Endothelial cell of umbilical vein (primary cell): ENCODE measurements at regions of chr2 and their contacts with region 1.

Region 1: GRCh38 chr2:192162392-192163042 is 32.2 kb downstream of the TMEFF2 start:
- DNase-seq: peak; percentile 87
- H3K4me3 ChIP-seq: no peak overlapping the region
- H3K27ac ChIP-seq: peak overlapping the region; percentile 16
- H3K4me1 ChIP-seq: peaks cover 12% of the 10 kb centered on the region
- H3K27me3 ChIP-seq: no peaks in the 10 kb centered on the region
- CTCF ChIP-seq: peak; percentile 68 to 73
- POLR2A ChIP-seq: no peak

Region 2: DNA sequence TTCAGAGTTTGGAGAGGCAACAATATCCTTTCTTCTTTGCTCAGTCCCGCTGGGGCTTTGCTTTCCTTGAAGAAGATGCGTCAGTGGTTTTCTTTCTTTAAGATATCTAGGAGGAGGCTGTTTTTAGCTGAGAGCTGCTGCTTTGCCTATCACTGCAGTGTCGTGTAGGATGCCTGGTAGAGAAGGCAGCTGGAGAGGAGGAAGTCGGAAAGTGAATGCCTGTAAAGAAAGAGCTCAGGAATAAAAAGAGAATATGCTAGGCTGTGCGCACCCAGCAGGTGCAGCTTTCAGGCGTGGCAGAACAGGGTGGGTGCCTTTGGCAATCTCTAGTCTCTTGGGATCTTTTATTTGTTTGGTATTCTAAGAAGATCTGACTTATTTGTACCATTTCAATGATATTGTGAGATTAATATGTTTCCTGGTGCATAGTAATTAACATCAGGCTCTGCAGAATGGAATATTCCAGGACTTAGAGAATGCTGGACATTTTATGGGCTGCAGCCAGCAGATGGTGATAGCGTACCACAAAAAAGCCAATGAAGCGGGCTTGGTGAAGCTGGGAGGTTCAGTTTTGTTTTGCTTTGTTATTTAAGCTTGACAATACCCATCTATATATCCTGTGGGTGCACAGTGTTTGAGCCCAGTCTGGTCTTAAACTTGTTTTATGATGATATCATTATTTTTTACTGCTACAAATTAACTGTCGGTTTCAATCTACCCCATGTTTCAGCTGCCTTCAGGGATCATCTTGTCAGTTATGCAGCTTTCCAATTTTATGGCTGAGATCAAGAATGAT is 350.5 kb before region 1 on chr2:
- CTCF ChIA-PET with region 1: interaction called, 532 read pairs
- POLR2A ChIA-PET with region 1: interaction called, 17 read pairs
- dilution Hi-C with region 1: no loop called
- intact Hi-C with region 1: loop called (anchors 1 kb)
- DNase-seq: peak; percentile 86
- H3K4me3 ChIP-seq: no peak overlapping the region
- H3K27ac ChIP-seq: no peak overlapping the region
- H3K4me1 ChIP-seq: peaks cover 2% of the 10 kb centered on the region
- H3K27me3 ChIP-seq: no peaks in the 10 kb centered on the region
- CTCF ChIP-seq: peak; percentile 67 to 68
- POLR2A ChIP-seq: no peak

Region 3: GRCh38 chr2:191857259-191857805 is 305.2 kb before region 1 on chr2:
- CTCF ChIA-PET with region 1: interaction called, 13 read pairs
- POLR2A ChIA-PET with region 1: interaction called, 4 read pairs
- dilution Hi-C with region 1: no loop called
- intact Hi-C with region 1: no loop called
- DNase-seq: peak; percentile 97
- H3K4me3 ChIP-seq: no peak overlapping the region
- H3K27ac ChIP-seq: peak overlapping the region; percentile 93
- H3K4me1 ChIP-seq: peaks cover 56% of the 10 kb centered on the region
- H3K27me3 ChIP-seq: no peaks in the 10 kb centered on the region
- CTCF ChIP-seq: no peak
- POLR2A ChIP-seq: peak; percentile 74

Region 4: DNA sequence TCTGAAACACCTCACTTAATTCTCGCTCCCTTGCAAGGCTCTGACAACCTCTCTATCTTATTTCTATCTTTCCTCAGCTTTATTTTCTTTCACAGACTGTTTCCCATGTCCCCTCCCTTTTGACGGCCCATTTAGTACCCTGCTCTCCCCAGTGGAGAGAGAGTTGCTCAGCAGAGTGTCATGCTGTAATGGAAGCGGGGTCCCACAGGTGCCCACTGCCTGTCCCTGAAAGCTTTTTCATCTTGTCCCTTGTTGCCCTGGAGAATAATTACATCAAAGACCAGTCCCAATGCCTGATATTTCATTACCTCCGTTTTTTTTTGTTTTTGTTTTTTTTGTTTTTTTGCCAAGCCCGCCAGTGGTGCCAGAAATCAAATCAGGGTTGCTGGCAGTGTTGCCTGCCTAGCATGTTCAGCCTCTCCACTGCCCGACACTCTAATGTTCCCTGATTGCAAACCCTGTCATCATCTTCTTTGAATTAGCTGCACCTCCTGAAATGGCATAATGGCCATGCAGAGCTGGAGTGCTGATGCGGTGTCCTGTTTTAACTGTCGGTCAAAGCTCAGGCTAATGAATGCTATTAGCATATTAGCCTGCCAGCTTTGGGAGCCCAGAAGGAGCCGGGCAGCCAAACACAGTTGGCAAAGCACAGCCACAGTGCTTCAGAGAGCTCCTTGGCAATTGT is 244.4 kb before region 1 on chr2:
- CTCF ChIA-PET with region 1: interaction called, 16 read pairs
- POLR2A ChIA-PET with region 1: interaction called, 3 read pairs
- dilution Hi-C with region 1: no loop called
- intact Hi-C with region 1: no loop called
- DNase-seq: peak; percentile 68
- H3K4me3 ChIP-seq: no peak overlapping the region
- H3K27ac ChIP-seq: peak overlapping the region; percentile 56
- H3K4me1 ChIP-seq: peaks cover 18% of the 10 kb centered on the region
- H3K27me3 ChIP-seq: no peaks in the 10 kb centered on the region
- CTCF ChIP-seq: no peak
- POLR2A ChIP-seq: no peak

Region 5: DNA sequence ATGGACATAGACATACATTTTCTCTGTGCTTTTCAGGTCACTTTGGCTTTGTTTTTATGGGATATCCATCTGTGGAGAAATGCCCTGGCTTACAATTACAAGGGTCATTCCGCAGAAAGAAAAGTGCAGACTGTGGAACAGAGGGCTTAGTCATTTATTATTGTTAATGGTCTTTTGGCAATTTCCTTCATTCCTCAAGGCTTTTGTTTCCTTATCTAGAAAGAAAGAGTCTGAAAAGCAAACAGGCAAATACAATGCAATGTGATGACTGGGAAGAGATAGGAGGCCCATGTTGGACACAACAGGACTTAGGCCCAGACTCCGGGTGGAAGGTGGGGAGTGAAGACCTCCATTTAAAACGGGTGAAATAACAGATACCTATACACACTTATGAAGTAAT is 186.1 kb before region 1 on chr2:
- CTCF ChIA-PET with region 1: interaction called, 7 read pairs
- POLR2A ChIA-PET with region 1: no interaction called
- dilution Hi-C with region 1: no loop called
- intact Hi-C with region 1: loop called (anchors 2 kb)
- DNase-seq: peak; percentile 99
- H3K4me3 ChIP-seq: no peak overlapping the region
- H3K27ac ChIP-seq: peak overlapping the region; percentile 86
- H3K4me1 ChIP-seq: peaks cover 44% of the 10 kb centered on the region
- H3K27me3 ChIP-seq: no peaks in the 10 kb centered on the region
- CTCF ChIP-seq: no peak
- POLR2A ChIP-seq: peak; percentile 64

Region 6: DNA sequence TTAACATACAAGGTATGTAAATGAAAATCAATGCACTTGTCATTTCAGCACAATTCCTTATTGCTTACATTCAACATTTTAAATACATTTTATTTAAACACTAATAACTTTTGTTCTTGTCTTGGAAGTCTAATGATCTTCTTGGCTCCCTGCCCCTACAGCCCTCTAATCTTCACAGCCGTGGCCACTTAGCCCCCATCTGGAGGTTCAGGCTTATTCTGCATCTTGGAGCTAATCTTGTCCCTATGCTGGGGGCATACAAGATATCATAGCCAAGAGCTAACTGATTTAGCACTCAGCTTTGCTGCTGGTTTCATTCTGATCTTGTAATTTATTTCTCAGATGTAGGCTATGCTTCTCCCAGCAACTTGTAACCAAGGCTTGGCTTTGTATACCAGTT is 108.6 kb before region 1 on chr2:
- CTCF ChIA-PET with region 1: no interaction called
- POLR2A ChIA-PET with region 1: no interaction called
- dilution Hi-C with region 1: no loop called
- intact Hi-C with region 1: no loop called
- DNase-seq: no peak
- H3K4me3 ChIP-seq: no peak overlapping the region
- H3K27ac ChIP-seq: no peak overlapping the region
- H3K4me1 ChIP-seq: no peaks in the 10 kb centered on the region
- H3K27me3 ChIP-seq: no peaks in the 10 kb centered on the region
- CTCF ChIP-seq: no peak
- POLR2A ChIP-seq: no peak